ENCODE measurements at regions of chr19 and their contacts with region 1.

Region 1: DNA sequence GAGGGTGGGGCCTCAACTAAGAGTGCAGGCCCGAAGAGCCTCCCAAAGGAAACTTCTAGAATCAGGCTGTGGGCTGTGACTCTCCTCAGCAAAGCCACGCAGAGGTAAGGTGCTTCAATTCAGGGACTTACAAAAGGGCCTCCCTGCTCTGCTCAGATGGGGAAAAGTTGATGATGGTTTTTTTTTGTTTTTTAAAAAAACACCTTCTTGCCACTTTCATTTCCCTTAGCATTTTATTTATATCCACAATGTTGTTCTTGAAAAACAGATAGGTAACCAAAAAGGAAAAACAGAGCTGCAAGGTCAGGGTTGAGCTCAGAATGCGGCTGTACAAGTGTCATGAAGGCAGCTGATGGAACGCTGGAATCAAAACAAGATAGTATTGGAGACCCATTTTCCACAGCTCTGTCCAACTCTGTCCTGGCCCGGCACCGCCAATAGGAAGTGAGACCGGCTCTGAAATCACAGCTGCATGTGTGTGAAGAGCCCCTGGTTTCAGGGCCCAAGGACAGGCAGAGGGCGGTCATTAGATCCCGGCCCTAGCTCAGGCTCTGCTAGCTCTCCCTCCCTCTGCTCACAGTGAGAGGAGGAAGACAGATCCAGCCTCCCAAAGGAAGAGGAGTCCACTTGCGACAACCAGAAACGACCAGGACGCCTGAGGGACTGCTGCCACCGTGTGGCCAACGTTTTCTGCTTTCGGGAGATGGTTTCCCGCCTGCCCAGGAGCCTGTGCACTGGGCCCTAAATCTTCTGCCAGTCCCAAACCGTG is 58.3 kb downstream of the KLF2 start:
- DNase-seq: peak; percentile 33
- H3K4me3 ChIP-seq: no peak overlapping the region
- CTCF ChIP-seq: peak; percentile 91

Region 2: DNA sequence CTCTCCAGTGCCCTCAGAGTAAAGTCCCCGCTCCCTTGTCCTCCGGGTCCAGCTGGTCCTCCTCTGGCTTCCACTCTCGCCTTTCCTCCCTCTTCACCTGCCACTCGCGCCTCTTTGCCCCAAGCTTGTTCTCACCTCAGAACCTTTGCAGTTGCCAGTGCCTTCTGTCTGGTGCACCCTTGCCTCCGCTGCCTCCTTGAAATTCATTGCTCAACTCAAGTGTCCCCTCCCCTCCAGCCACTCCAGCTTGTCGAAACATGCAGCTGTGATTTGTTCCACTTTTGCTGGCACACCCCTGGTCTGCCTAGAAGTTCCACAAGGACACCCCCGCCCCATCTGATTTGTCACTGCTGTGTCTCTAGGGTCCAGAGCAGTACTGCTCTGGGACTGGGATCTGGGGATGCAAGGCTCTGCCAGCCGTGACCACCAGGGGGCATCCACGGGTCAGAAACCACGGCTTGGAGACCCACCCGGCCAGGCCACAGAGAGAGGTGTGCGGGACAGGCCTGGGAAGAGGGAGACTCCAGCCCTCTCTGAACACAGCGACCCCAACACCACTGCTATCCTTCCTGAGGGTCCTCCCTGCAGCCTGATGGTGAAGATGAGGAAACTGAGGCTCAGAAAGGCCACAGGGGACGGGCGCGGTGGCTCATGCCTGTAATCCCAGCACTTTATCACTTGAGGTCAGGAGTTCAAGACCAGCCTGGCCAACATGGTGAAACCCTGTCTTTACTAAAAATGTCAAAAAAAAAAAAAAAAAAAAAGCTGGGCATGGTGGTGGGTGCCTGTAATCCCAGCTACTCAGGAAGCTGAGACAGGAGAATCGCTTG is 135.4 kb before region 1 on chr19:
- CTCF ChIA-PET with region 1: interaction called, 352 read pairs
- POLR2A ChIA-PET with region 1: no interaction called
- DNase-seq: peak; percentile 4
- H3K4me3 ChIP-seq: no peak overlapping the region
- CTCF ChIP-seq: peak; percentile 96

Region 3: DNA sequence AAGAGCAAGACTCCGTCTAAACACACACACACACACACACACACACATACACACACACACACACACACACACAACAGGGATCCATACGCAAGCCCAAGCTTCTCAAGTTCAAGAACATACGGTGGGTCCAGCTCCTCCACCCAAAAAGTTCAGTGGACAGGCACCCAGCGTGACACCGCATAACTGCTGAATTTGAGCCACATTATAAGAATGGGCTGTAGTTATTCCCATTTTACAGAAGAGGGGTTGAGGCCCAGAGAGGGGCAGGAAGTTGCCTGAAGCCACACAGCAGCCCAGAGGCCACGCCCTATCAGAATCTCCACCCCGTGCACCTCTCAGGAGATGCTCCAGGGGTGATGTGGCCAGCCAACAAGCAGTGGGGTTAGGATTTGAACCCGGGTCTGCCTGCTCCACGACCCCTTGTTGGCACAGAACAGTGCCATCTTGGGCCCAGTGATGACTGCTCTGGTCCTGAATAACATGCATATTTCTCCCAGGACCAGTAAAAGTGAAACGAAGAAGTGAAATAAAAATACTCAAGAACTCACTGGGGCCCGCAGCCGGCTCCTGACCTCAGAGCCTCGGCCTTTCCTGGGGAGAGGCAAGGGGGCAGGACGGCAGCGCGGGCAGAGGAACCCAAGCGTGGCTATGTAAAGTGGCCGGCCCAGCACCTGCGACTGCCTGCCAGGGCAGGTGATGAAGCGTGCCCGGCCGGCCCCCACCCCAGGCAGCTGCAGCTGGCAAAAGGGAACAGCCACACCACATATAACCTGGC is 123.4 kb before region 1 on chr19:
- CTCF ChIA-PET with region 1: interaction called, 17 read pairs
- POLR2A ChIA-PET with region 1: no interaction called
- DNase-seq: no peak
- H3K4me3 ChIP-seq: no peak overlapping the region
- CTCF ChIP-seq: no peak

Region 4: DNA sequence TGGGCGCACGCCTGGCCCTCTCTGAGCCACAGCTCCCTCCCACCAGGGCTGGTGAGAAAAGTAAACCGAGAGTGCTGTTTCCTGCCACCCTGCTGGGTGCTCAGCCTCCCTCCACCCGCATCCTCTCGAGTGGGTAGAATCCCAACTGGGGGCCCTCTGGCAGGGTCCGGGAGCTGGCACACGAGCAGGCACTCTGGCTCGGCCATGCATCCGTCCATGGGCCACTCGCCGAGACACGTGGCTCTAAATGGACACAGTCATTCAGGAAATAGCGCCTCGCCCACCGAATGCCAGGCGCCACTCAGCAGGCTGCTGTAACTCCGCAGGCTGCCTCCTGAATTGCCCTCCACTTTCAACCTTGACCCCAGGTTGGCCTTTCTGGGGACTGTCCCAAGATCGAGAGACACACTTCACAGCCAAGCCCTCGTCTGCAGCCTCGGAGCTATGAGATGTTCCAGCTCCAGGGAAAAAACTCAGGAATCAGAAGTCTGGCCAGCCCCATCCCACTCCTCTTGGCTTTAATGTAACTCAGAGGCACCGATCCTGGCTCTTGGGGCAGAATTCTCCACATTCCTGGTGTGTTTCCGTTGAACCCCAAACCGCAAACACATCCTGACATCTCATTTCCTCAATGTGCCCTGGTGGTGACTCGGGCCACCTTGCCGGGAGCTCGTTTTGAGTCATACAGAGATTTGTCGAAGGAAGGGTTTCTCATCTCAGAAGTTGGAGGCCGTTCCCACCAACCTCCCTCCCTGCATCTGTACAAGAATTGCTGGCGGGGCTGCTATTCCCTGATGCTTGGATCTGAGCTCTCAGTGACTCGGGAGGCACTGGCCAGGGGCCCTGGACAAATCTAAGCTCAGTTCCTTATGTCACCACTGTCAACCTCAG is 44.2 kb before region 1 on chr19:
- CTCF ChIA-PET with region 1: interaction called, 11 read pairs
- POLR2A ChIA-PET with region 1: no interaction called
- DNase-seq: no peak
- H3K4me3 ChIP-seq: no peak overlapping the region; the same call in 1 of the 2 replicates
- CTCF ChIP-seq: peak; percentile 11

Region 5: GRCh38 chr19:16371540-16371986 is 11.4 kb before region 1 on chr19:
- CTCF ChIA-PET with region 1: interaction called, 30 read pairs
- POLR2A ChIA-PET with region 1: no interaction called
- DNase-seq: no peak
- H3K4me3 ChIP-seq: no peak overlapping the region
- CTCF ChIP-seq: no peak

Region 6: GRCh38 chr19:16400911-16401591 is 18.1 kb after region 1 on chr19:
- CTCF ChIA-PET with region 1: interaction called, 20 read pairs
- POLR2A ChIA-PET with region 1: no interaction called
- DNase-seq: no peak
- H3K4me3 ChIP-seq: no peak overlapping the region
- CTCF ChIP-seq: no peak

Measured in AG04449 (cell line).